Activated CD8-positive, alpha-beta memory T cell treated with anti-CD3 and anti-CD28 coated beads, Interleukin-2, amount 10 ng/mL, durations not matched to agents 7 days and 5 days (primary cell): ENCODE measurements at regions of chr14 and their contacts with region 1.

Region 1: DNA sequence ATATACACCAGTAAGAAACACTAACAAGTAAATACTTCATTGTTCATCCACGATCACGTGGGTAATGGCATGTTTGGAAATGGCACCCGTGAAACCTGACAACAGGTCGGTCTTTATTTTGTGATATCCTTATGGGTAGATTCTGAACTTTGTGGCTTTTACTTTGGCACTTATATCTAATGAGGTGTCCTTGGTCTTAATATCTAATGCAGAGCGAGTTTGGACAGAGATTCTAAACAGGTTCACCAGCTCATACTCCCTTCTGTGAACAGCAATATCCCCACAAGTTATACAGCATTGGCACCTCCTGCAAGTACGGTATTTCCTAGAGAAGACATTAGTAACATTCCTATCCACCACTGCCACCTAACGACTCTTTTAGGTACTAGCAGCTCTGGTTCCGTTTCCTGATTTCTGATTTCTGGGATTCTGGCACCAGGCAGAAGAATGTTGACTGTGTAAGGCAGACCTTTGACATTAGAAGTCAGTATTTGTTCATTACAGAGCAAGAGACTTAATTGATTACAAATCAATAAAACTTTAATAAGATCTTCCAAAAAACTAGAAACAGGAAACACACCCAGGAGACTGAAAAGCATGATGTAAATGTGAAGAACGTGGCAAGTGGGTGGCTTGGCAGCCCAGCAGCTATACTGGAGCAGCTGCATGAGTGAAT is 2.4 kb downstream of the ANG start:
- DNase-seq: peak; percentile 57
- ATAC-seq: peak; percentile 81
- H3K4me3 Mint-ChIP-seq: no peak overlapping the region
- H3K27ac Mint-ChIP-seq: peak overlapping the region; percentile 69
- H3K4me1 Mint-ChIP-seq: peaks cover 33% of the 10 kb centered on the region
- H3K27me3 Mint-ChIP-seq: no peaks in the 10 kb centered on the region

Region 2: GRCh38 chr14:20632682-20633428 is 58.1 kb before region 1 on chr14:
- CTCF ChIA-PET with region 1: interaction called, 11 read pairs
- DNase-seq: peak; percentile 84
- ATAC-seq: peak; percentile 84
- H3K4me3 Mint-ChIP-seq: peak overlapping the region; percentile 73
- H3K27ac Mint-ChIP-seq: peak overlapping the region; percentile 81
- H3K4me1 Mint-ChIP-seq: peaks cover 39% of the 10 kb centered on the region
- H3K27me3 Mint-ChIP-seq: peaks cover 79% of the 10 kb centered on the region

Region 3: GRCh38 chr14:20662968-20663732 is 27.8 kb before region 1 on chr14:
- CTCF ChIA-PET with region 1: interaction called, 163 read pairs
- DNase-seq: peak; percentile 90
- ATAC-seq: peak; percentile 82
- H3K4me3 Mint-ChIP-seq: peak overlapping the region; percentile 78
- H3K27ac Mint-ChIP-seq: peak overlapping the region; percentile 28
- H3K4me1 Mint-ChIP-seq: peaks cover 49% of the 10 kb centered on the region
- H3K27me3 Mint-ChIP-seq: peaks cover 32% of the 10 kb centered on the region

Region 4: DNA sequence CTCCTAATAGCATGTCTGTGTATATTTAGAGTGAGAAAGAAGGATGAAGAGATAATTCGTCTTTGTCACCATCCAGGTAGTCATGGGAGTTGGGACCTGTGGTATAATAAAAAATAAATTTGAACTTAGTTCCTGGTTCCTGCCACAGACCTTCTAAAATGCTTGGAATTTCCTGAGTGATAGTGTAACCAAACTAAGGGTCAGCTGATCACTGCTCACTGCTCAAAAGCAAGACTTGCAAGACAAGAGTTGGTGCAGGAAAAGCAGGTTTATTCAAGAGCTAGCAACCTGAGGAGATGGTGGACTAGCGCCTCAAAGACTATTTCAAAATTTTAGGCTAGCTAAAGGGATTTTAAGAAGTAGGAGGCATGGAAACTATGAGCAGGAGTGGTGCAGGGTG is 16.6 kb after region 1 on chr14:
- CTCF ChIA-PET with region 1: no interaction called
- DNase-seq: no peak
- ATAC-seq: no peak
- H3K4me3 Mint-ChIP-seq: no peak overlapping the region
- H3K27ac Mint-ChIP-seq: no peak overlapping the region
- H3K4me1 Mint-ChIP-seq: no peaks in the 10 kb centered on the region
- H3K27me3 Mint-ChIP-seq: peaks cover 6% of the 10 kb centered on the region